GM12878 (cell line): ENCODE measurements at regions of chr3 and their contacts with region 1.

Region 1: DNA sequence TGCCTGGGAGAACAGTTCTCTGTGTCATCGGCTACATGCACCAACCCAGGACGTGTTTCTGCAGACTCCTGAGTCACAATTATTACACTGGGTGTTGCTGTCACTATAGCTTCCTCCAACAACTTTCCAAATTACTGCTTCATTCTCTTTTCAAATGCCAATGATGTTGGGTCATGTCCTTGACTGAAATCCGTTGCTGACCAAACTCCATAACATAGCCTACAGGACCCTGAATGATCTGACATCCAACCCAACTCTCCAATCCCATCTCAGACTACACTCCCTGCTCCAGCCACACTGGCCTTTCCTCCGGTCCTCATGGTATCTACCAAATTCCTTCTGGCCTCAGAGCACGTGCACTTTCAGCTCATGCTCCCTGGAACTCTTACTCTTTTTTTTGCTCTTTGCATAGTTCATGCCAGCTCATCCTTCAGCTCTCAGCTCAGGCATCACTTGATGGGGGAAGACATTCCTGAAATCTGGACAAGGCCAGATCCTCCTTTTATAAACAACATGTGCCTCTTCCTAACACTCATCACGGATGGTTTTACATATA is 108.8 kb upstream of the PTPRG start:
- DNase-seq: no peak
- ATAC-seq: no peak
- H3K4me3 ChIP-seq: no peak overlapping the region
- H3K27ac ChIP-seq: no peak overlapping the region
- H3K4me1 ChIP-seq: no peaks in the 10 kb centered on the region
- H3K27me3 ChIP-seq: no peaks in the 10 kb centered on the region
- CTCF ChIP-seq: no peak
- EP300 ChIP-seq: no peak
- POLR2A ChIP-seq: no peak
- RAD21 ChIP-seq: no peak

Region 2: GRCh38 chr3:61032991-61033390 is 419.6 kb before region 1 on chr3:
- CTCF ChIA-PET with region 1: no interaction called
- POLR2A ChIA-PET with region 1: no interaction called
- RAD21 ChIA-PET with region 1: no interaction called
- SMC1A ChIA-PET with region 1: no interaction called
- in situ Hi-C with region 1: no loop called
- intact Hi-C with region 1: no loop called
- DNase-seq: no peak
- ATAC-seq: no peak
- H3K4me3 ChIP-seq: no peak overlapping the region
- H3K27ac ChIP-seq: no peak overlapping the region
- H3K4me1 ChIP-seq: no peaks in the 10 kb centered on the region
- H3K27me3 ChIP-seq: no peaks in the 10 kb centered on the region
- CTCF ChIP-seq: no peak
- EP300 ChIP-seq: no peak
- POLR2A ChIP-seq: no peak
- RAD21 ChIP-seq: no peak

Region 3: DNA sequence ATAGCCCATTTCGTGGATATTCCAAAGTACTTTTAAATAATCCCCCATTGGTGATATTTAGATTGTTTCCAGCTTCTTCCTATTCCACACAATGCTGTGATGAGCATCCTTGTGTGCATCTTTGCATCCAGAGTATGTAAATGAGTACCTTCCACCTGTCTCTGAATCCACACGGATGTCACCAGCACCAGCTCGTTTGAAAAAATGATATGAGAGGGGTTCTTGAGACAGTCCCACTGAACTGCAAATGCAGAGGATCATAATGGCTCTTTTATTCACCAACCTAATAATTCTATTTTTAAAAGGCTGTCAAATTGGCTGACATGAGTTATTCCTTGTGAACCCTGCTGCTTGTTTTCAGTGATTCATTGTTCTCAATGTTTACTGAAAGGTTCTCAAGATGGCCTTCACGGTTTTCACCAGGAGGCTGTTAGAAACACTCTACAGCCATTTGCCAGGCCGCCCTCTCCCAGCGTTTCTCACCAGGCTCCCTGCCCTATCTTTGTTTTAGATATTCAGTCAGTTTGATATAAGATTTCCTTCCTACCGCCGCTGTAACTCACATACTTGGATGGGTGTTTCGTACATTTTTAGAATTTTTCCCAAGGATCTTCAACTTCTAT is 12.0 kb after region 1 on chr3:
- CTCF ChIA-PET with region 1: no interaction called
- POLR2A ChIA-PET with region 1: no interaction called
- RAD21 ChIA-PET with region 1: interaction called, 4 read pairs
- SMC1A ChIA-PET with region 1: interaction called, 10 read pairs
- in situ Hi-C with region 1: no loop called
- intact Hi-C with region 1: no loop called
- DNase-seq: no peak
- ATAC-seq: no peak
- H3K4me3 ChIP-seq: no peak overlapping the region
- H3K27ac ChIP-seq: no peak overlapping the region
- H3K4me1 ChIP-seq: no peaks in the 10 kb centered on the region
- H3K27me3 ChIP-seq: no peaks in the 10 kb centered on the region
- CTCF ChIP-seq: no peak
- EP300 ChIP-seq: no peak
- POLR2A ChIP-seq: no peak
- RAD21 ChIP-seq: no peak